MCF 10A (cell line): ENCODE measurements at regions of chr5 and their contacts with region 1.

Region 1: GRCh38 chr5:58002318-58002717 is 457.6 kb downstream of the PLK2 start:
- DNase-seq: peak; percentile 85
- H3K4me3 Mint-ChIP-seq: no peak overlapping the region
- H3K27ac Mint-ChIP-seq: peak overlapping the region; percentile 36
- H3K4me1 Mint-ChIP-seq: peaks cover 22% of the 10 kb centered on the region
- H3K27me3 Mint-ChIP-seq: no peaks in the 10 kb centered on the region
- CTCF ChIP-seq: no peak

Region 2: DNA sequence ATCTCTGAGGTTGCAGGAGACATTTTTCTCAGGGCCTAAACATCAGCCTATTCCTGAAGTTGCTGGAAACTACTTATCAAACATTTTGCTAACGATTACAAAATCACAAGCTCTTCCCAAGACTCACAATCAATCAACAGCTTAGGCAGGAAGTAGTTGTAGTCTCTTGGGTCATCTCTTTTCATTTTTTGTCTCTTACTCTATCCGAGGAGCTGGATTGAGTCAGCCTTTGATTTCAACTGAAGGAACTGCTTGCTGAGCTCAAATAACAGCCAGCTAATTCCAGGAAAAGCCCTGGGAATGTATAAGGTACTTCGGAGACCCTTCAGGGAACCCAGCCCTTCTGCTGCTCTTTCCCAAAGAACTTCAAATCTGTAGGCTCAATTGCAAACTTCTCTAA is 58.7 kb after region 1 on chr5:
- CTCF ChIA-PET with region 1: no interaction called
- POLR2A ChIA-PET with region 1: no interaction called
- intact Hi-C with region 1: no loop called
- DNase-seq: no peak
- H3K4me3 Mint-ChIP-seq: no peak overlapping the region
- H3K27ac Mint-ChIP-seq: no peak overlapping the region
- H3K4me1 Mint-ChIP-seq: no peaks in the 10 kb centered on the region
- H3K27me3 Mint-ChIP-seq: no peaks in the 10 kb centered on the region
- CTCF ChIP-seq: no peak

Region 3: GRCh38 chr5:58452566-58453258 is 450.4 kb after region 1 on chr5:
- CTCF ChIA-PET with region 1: no interaction called
- POLR2A ChIA-PET with region 1: no interaction called
- intact Hi-C with region 1: loop called (anchors 5 kb)
- DNase-seq: no peak
- H3K4me3 Mint-ChIP-seq: peak overlapping the region; percentile 1
- H3K27ac Mint-ChIP-seq: peak overlapping the region; percentile 55
- H3K4me1 Mint-ChIP-seq: peaks cover 43% of the 10 kb centered on the region
- H3K27me3 Mint-ChIP-seq: no peaks in the 10 kb centered on the region
- CTCF ChIP-seq: no peak